ENCODE measurements at regions of chr10 and their contacts with region 1.

Region 1: DNA sequence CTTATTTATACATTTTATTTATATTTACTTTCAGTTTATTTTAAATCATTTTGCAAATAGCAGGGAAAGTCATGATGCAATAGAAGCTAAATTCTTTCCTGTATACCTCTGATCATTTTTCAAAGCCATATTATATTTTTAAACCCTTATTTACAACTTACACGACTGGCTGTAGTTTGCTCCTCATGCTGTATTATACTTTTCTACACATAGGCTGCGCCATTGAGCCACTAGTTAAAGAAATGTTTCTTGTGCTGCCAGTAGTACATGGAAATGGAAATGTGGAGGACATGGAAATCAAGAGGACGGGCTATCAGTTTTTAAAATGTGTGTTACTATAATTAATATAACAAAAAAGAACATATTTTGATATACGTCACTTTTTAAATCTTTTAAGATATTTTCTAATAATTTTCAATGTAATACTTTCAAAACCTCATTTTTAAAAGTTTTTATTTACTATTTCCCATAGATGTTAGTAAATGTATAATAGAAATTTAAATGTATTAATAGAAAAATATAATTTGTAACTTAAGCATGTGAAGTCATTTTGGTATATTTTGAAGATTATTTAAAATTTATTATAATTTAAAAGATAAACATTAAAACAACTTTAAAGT is 118.5 kb downstream of the VTI1A start:
- DNase-seq: peak; percentile 62 to 72
- H3K4me3 ChIP-seq: no peak overlapping the region
- H3K4me1 ChIP-seq: peaks cover 12% of the 10 kb centered on the region
- H3K27me3 ChIP-seq: no peaks in the 10 kb centered on the region

Region 2: GRCh38 chr10:112689299-112690072 is 123.9 kb after region 1 on chr10:
- in situ Hi-C with region 1: loop called (anchors 10 kb)
- DNase-seq: peak; percentile 35 to 78
- H3K4me3 ChIP-seq: no peak overlapping the region
- H3K4me1 ChIP-seq: no peaks in the 10 kb centered on the region; the same call in 1 of the 2 replicates
- H3K27me3 ChIP-seq: no peaks in the 10 kb centered on the region

Region 3: GRCh38 chr10:113385021-113385999 is 819.8 kb after region 1 on chr10:
- in situ Hi-C with region 1: loop called (anchors 10 kb)
- DNase-seq: peak; percentile 80 to 81
- H3K4me3 ChIP-seq: no peak overlapping the region
- H3K4me1 ChIP-seq: no peaks in the 10 kb centered on the region
- H3K27me3 ChIP-seq: peaks cover 13% of the 10 kb centered on the region